GM23248 (cell line): ENCODE measurements at regions of chr18 and their contacts with region 1.

Region 1: GRCh38 chr18:67515945-67516538 is 478 bp downstream of the DSEL start:
- DNase-seq: peak; percentile 93
- H3K4me3 ChIP-seq: peak overlapping the region; percentile 83
- H3K27ac ChIP-seq: peak overlapping the region; percentile 85
- H3K4me1 ChIP-seq: peaks cover 59% of the 10 kb centered on the region
- H3K27me3 ChIP-seq: no peaks in the 10 kb centered on the region

Region 2: DNA sequence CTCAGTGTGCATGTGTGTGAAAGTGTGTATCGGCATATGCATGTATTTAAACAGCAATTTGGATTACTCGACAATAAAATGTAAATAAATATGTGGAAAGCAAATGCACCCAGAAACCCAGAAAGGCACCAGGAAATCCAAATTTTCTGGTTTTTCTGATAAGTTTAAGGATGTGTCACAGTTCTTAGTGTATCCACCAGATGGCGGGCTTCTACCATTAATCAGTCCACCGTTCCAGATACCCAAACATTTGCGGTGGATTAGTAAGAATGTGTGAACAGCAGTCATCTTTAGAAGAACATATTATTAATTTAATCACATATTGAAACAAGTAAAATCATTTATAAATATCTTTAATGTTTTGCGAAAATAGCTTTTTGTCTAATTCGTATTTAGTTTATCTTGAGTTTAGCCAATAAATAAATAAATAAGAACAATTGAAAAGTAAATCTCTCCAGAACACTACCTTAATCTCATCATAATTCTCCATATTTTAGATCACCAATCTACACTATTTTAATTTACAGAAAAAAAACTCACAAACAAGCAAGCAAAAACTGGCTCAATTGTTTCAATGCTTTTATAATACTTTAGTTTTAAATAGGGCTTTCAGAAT is 298.4 kb before region 1 on chr18:
- in situ Hi-C with region 1: loop called (anchors 10 kb)
- DNase-seq: peak; percentile 83
- H3K4me3 ChIP-seq: no peak overlapping the region
- H3K27ac ChIP-seq: no peak overlapping the region
- H3K4me1 ChIP-seq: peaks cover 25% of the 10 kb centered on the region; the same call in 1 of the 2 replicates
- H3K27me3 ChIP-seq: no peaks in the 10 kb centered on the region

Region 3: GRCh38 chr18:67386028-67386427 is 130.0 kb before region 1 on chr18:
- in situ Hi-C with region 1: no loop called
- DNase-seq: peak; percentile 41
- H3K4me3 ChIP-seq: no peak overlapping the region
- H3K27ac ChIP-seq: no peak overlapping the region
- H3K4me1 ChIP-seq: peaks cover 11% of the 10 kb centered on the region; the same call in 1 of the 2 replicates
- H3K27me3 ChIP-seq: no peaks in the 10 kb centered on the region

Region 4: DNA sequence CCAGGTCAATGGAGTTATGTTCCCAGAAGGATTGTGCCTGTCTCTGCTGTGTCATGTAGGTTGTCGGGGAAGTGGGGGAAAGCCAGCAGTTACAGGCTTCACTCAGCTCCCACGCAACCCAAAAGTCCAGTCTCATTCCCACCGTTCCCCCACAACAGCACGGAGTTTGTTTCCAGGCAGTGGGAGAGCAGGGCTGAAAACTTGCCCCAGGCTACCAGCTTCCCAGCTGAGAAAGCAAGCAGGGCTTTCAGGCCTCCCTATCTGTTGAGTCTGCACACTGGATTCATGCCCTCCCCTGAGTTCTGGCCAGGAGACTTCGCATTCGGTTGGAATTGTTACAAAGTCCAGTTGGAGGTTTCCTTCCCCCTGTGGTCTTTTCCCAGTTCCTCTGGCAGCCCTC is 1122.6 kb after region 1 on chr18:
- in situ Hi-C with region 1: loop called (anchors 10 kb)
- DNase-seq: no peak
- H3K4me3 ChIP-seq: no peak overlapping the region
- H3K27ac ChIP-seq: no peak overlapping the region
- H3K4me1 ChIP-seq: no peaks in the 10 kb centered on the region
- H3K27me3 ChIP-seq: no peaks in the 10 kb centered on the region